ENCODE measurements at regions of chr5 and their contacts with region 1.

Region 1: GRCh38 chr5:96893342-96893741 is 17.0 kb downstream of the ERAP2 start:
- DNase-seq: peak; percentile 90
- ATAC-seq: peak; percentile 99
- H3K4me3 ChIP-seq: no peak overlapping the region
- H3K27ac ChIP-seq: no peak overlapping the region
- H3K4me1 ChIP-seq: peaks cover 3% of the 10 kb centered on the region; the same call in 1 of the 2 replicates
- H3K27me3 ChIP-seq: no peaks in the 10 kb centered on the region
- CTCF ChIP-seq: no peak
- POLR2A ChIP-seq: no peak
- RAD21 ChIP-seq: no peak

Region 2: DNA sequence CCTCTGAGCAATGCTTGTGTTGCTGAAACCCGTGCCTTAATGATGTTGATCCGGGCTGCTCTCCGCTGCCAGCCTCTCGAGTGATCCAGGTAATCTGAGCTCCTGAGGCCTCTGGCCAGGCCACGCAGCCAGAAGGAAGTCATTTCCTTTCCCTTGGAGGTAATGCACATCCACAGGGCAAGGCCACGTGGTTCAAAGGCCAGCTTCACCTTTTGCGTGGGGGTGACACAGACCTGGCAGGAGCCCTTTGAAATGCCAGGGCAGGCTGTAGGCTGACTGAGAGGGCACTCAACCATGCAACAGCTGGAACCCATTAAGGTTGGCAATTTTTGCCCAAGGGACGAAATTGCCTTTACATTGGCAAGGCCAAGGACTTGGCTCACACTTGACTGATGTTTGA is 168.7 kb after region 1 on chr5:
- CTCF ChIA-PET with region 1: no interaction called
- POLR2A ChIA-PET with region 1: interaction called, 16 read pairs
- dilution Hi-C with region 1: no loop called
- in situ Hi-C with region 1: no loop called
- intact Hi-C with region 1: no loop called
- DNase-seq: no peak
- ATAC-seq: no peak
- H3K4me3 ChIP-seq: no peak overlapping the region
- H3K27ac ChIP-seq: no peak overlapping the region
- H3K4me1 ChIP-seq: no peaks in the 10 kb centered on the region
- H3K27me3 ChIP-seq: peaks cover 17% of the 10 kb centered on the region
- CTCF ChIP-seq: no peak
- POLR2A ChIP-seq: no peak
- RAD21 ChIP-seq: no peak

Measured in IMR-90 (cell line).